ENCODE measurements at regions of chr9 and their contacts with region 1.

Region 1: DNA sequence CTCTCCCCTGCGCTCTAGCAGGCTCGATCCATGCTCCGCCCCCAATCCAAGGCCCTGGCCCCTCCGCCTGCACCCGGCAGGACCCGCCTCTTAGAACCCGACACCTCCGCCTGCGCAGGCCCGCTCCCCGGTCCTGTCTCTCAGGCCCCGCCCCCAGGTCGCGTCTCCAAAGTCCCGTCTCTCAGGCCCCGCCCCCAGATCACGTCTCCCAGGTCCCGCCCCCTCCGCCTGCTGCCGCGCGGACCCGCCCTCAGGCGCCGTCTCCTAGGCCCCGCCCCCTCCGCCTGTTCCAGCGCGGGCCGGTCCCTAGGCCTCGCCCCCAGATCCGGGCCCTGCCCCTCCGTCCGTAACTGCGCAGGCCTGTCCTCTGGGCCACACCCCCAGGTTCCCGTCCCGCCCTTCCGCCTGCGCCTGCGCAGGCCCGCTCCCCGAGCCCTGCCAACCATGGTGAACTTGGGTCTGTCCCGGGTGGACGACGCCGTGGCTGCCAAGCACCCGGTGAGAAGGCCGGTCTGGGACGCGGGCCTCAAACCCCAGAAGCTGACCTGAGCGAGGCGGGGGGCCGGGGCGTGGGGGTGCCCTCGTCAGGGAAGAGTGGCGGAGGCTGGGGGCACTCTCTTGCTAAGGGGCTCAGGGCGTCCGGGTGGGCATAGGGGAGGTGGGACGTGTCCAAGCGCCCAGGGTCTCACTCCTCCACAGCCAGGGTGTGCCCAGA is at the start of gene TMEM141:
- DNase-seq: peak; percentile 99
- ATAC-seq: peak; percentile 84
- H3K4me3 ChIP-seq: peak within 1 kb of the TSS in 4 of 5 experiments; percentile 69 to 84 (median 80)
- H3K4me3 Mint-ChIP-seq: peak within 1 kb of the TSS; percentile 87
- H3K27ac ChIP-seq: peak within 1 kb of the TSS; percentile 97 to 99
- H3K27ac Mint-ChIP-seq: peak within 1 kb of the TSS; percentile 95
- H3K4me1 ChIP-seq: peaks cover 18 to 27% of the 10 kb centered on the region in 2 donors
- H3K4me1 Mint-ChIP-seq: peaks cover 23% of the 10 kb centered on the region
- H3K27me3 ChIP-seq: no peaks in the 10 kb centered on the region
- H3K27me3 Mint-ChIP-seq: peaks cover under 1% of the 10 kb centered on the region
- CTCF ChIP-seq: no peak
- total RNA-seq, gene TMEM141: 35.7 and 39.1 TPM in 2 replicates

Region 2: DNA sequence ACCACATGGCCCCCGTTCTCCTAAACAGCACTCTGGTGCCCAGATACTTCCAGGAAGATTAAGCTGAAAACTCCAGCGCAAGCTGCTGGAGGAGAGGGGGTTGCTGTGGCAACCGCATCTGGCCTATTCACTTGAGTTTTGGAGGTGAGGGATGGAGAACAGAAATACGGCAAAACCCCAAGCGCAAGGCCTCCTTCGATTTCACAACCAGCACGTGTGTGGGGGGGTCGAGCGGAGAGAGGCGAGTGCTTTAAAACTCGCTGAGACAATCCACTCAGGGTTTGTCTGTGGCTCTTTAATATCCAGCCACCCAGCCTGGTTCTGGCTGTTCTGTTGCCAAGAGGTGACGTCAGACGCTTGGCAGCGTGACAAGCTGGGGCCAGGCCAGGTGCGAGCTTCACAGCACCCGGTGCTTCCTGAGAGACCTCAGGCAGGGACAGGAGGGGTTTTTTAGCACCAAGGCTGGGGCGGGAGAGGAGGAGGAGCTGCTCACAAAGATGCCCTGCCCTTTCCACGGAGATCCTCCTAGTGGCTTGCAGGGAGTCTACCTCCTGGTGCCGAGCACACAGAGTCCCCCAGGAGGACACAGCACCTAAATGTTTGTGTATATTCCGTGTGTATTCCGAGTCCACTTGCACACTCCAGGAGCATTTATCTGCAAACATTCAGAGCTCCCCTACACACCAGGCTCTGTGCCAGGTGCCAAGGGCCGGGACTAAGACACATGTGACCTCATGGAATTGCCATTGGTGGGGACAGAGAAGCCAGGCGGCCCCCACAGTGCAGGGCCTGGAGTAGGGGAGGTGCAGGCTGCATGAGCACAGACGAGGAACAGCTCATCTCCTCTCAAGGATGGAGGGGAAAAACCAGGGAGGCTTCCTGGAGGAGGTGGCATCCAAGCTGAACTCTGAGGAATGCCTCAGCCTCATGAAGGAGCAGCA is 1509.0 kb before region 1 on chr9:
- CTCF ChIA-PET with region 1: no interaction called
- POLR2A ChIA-PET with region 1: no interaction called
- intact Hi-C with region 1: no loop called
- DNase-seq: no peak
- ATAC-seq: no peak
- H3K4me3 ChIP-seq: no peak overlapping the region
- H3K4me3 Mint-ChIP-seq: no peak overlapping the region
- H3K27ac ChIP-seq: no peak overlapping the region
- H3K27ac Mint-ChIP-seq: no peak overlapping the region
- H3K4me1 ChIP-seq: no peaks in the 10 kb centered on the region
- H3K4me1 Mint-ChIP-seq: no peaks in the 10 kb centered on the region
- H3K27me3 ChIP-seq: no peaks in the 10 kb centered on the region
- H3K27me3 Mint-ChIP-seq: no peaks in the 10 kb centered on the region
- CTCF ChIP-seq: no peak

Region 3: DNA sequence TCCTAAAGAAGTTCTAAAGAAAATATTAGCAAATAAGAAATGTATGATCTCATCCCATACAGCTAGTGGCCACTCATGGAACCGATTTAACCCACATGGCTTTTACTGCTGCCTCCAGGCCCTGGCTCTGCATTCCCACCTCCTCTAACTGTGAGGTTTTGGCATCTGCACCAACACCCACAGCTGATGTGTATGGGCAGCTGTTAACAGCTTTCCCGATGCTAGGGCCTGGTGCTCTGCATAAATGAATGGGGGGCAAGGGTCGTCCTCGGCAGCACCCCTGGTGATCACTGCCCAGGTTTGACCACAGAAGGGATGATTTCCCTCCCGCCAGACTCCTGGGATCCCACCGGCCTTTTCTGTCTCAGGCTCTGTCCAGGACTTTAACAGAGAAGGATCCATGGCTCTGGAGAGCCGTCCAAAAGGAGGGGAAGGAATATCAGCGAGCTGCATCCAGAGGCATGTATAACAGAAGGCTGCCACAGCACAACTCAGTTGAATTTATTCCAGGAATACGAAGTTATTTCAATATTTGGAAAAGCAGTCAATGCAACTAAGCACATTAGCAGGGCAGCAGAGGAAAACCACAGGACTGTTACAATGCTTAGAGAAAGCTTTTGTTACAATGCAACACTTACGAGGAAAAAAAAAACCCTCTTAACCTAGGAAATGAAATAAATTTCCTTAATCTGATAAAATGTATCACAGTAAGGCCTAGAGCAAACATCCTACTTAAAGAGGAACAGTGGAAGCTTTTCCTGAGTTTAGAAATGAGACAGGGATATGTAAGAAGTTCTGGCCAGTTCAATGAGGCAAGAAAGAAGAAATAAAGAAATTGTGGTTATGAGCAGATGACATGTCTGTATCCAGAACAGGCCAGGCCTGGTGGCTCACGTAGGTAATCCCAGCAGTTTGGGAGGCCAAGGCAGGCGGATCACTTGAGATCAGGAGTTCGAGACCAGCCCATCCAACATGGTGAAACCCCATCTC is 759.0 kb before region 1 on chr9:
- CTCF ChIA-PET with region 1: no interaction called
- POLR2A ChIA-PET with region 1: no interaction called
- intact Hi-C with region 1: no loop called
- DNase-seq: no peak
- ATAC-seq: no peak
- H3K4me3 ChIP-seq: no peak overlapping the region
- H3K4me3 Mint-ChIP-seq: no peak overlapping the region
- H3K27ac ChIP-seq: no peak overlapping the region
- H3K27ac Mint-ChIP-seq: no peak overlapping the region
- H3K4me1 ChIP-seq: no peaks in the 10 kb centered on the region
- H3K4me1 Mint-ChIP-seq: no peaks in the 10 kb centered on the region
- H3K27me3 ChIP-seq: no peaks in the 10 kb centered on the region
- H3K27me3 Mint-ChIP-seq: peaks cover 10% of the 10 kb centered on the region
- CTCF ChIP-seq: no peak

Region 4: GRCh38 chr9:136769710-136770191 is 21.3 kb before region 1 on chr9:
- CTCF ChIA-PET with region 1: interaction called, 7 read pairs
- POLR2A ChIA-PET with region 1: interaction called, 4 read pairs
- intact Hi-C with region 1: loop called (anchors 2 kb)
- DNase-seq: peak; percentile 67
- ATAC-seq: no peak
- H3K4me3 ChIP-seq: no peak overlapping the region
- H3K4me3 Mint-ChIP-seq: peak overlapping the region; percentile 37
- H3K27ac ChIP-seq: no peak overlapping the region
- H3K27ac Mint-ChIP-seq: peak overlapping the region; percentile 46
- H3K4me1 ChIP-seq: peaks cover 23 to 45% of the 10 kb centered on the region in 2 donors
- H3K4me1 Mint-ChIP-seq: peaks cover 37% of the 10 kb centered on the region
- H3K27me3 ChIP-seq: peaks cover 0 to 8% (median 0%) of the 10 kb centered on the region in 4 experiments
- H3K27me3 Mint-ChIP-seq: peaks cover 6% of the 10 kb centered on the region
- CTCF ChIP-seq: peak; percentile 33

Region 5: GRCh38 chr9:136849038-136849959 is 58.2 kb after region 1 on chr9 and contains the start of gene PHPT1:
- CTCF ChIA-PET with region 1: no interaction called
- POLR2A ChIA-PET with region 1: no interaction called
- intact Hi-C with region 1: no loop called
- DNase-seq: peak; percentile 99
- ATAC-seq: peak; percentile 94
- H3K4me3 ChIP-seq: peak within 1 kb of the TSS; percentile 53 to 87 (median 82)
- H3K4me3 Mint-ChIP-seq: peak within 1 kb of the TSS; percentile 96
- H3K27ac ChIP-seq: peak within 1 kb of the TSS in 1 of 2 donors; percentile 55
- H3K27ac Mint-ChIP-seq: peak within 1 kb of the TSS; percentile 94
- H3K4me1 ChIP-seq: peaks cover 33 to 38% of the 10 kb centered on the region in 2 donors
- H3K4me1 Mint-ChIP-seq: peaks cover 20% of the 10 kb centered on the region
- H3K27me3 ChIP-seq: peaks cover 0 to 28% (median 9%) of the 10 kb centered on the region in 4 experiments
- H3K27me3 Mint-ChIP-seq: peaks cover 7% of the 10 kb centered on the region
- CTCF ChIP-seq: no peak
- total RNA-seq, gene PHPT1: 33.1 and 36.5 TPM in 2 replicates

Region 6: DNA sequence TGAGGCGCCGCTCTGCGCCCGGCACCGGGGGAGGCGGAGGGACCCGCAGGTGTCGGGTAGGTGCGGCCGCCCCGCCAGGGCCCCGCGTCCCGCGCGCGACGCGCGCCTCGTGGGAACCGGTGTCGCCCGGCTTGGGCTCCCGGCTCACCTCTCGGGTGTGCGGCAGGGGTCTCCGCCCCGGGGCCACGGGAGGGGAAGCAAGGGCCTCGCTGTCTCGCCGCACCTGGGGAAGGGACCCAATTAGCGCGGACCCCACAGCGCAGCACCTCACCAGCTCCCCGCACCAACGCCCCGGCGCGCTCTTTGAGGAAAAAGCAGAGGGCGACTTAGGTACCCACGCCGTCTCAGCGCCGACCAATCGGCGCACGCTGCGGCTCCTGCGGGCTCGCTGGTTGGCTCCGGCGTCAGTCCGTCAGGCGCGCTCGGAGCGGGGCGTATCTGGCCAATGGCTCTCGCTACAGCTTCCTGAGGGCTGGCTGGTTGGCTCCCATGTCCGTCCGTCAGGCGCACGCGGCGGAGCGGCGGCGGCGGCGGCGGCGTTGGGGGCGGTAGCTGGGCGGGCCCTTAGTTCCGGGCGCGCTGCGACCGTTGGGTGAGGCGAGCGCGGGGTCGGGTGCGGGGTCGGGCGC is 95.0 kb after region 1 on chr9 and contains the start of gene TRAF2:
- CTCF ChIA-PET with region 1: interaction called, 4 read pairs
- POLR2A ChIA-PET with region 1: no interaction called
- intact Hi-C with region 1: loop called (anchors 1 kb)
- DNase-seq: peak; percentile 99
- ATAC-seq: peak; percentile 91
- H3K4me3 ChIP-seq: peak within 1 kb of the TSS; percentile 30 to 91 (median 83)
- H3K4me3 Mint-ChIP-seq: peak within 1 kb of the TSS; percentile 91
- H3K27ac ChIP-seq: peak within 1 kb of the TSS; percentile 78 to 99
- H3K27ac Mint-ChIP-seq: peak within 1 kb of the TSS; percentile 87
- H3K4me1 ChIP-seq: peaks cover 28 to 36% of the 10 kb centered on the region in 2 donors
- H3K4me1 Mint-ChIP-seq: peaks cover 34% of the 10 kb centered on the region
- H3K27me3 ChIP-seq: no peaks in the 10 kb centered on the region
- H3K27me3 Mint-ChIP-seq: no peaks in the 10 kb centered on the region
- CTCF ChIP-seq: no peak
- total RNA-seq, gene TRAF2: 54.5 and 55.4 TPM in 2 replicates

Region 7: DNA sequence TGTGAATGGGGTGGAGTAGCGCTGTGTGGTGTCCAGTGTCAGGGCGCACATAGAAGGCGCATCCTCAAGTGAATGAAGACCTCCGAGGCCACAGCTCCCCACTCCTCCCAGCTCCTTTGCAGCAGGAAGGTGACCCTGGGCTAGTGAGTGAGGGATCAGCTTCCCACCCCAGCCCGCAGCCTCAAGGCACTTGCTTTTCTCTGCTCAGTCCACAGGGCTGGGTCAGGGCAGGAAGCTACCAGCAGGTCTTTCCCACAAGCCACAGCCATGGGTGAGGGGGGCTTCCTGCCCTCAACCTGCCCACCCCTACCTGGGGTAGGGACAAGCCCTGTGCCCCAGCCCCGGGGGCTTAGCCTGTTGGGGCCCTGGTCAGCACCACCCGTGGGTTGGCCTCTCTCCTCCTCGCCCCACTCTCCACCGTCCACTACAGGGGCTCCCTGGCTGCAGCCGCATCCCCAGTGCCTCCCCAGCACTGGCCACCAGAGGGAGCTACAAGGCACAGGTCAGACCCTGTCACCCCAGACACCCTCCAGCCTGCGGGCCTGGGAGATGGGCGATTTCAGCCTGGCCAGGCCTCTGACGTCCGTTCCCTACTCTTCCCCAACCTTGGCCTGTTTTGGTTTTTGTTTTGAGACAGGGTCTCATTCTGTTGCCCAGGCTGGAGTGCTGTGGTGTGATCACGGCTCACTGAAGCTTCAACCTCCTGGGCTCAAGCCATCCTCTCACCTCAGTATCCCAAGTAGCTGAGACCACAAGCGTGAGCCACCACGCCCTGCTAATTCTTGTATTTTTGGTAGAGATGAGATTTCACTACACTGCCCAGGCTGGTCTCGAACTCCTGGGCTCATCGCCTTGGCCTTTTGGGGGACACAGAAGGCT is 238.2 kb after region 1 on chr9:
- CTCF ChIA-PET with region 1: interaction called, 106 read pairs
- POLR2A ChIA-PET with region 1: no interaction called
- intact Hi-C with region 1: loop called (anchors 1 kb)
- DNase-seq: peak; percentile 85
- ATAC-seq: peak; percentile 31
- H3K4me3 ChIP-seq: peak overlapping the region; percentile 4 to 77 (median 66)
- H3K4me3 Mint-ChIP-seq: peak overlapping the region; percentile 90
- H3K27ac ChIP-seq: peak overlapping the region in 1 of 2 donors; percentile 71
- H3K27ac Mint-ChIP-seq: peak overlapping the region; percentile 92
- H3K4me1 ChIP-seq: peaks cover 61 to 78% of the 10 kb centered on the region in 2 donors
- H3K4me1 Mint-ChIP-seq: peaks cover 66% of the 10 kb centered on the region
- H3K27me3 ChIP-seq: no peaks in the 10 kb centered on the region
- H3K27me3 Mint-ChIP-seq: no peaks in the 10 kb centered on the region
- CTCF ChIP-seq: peak; percentile 87

Region 8: DNA sequence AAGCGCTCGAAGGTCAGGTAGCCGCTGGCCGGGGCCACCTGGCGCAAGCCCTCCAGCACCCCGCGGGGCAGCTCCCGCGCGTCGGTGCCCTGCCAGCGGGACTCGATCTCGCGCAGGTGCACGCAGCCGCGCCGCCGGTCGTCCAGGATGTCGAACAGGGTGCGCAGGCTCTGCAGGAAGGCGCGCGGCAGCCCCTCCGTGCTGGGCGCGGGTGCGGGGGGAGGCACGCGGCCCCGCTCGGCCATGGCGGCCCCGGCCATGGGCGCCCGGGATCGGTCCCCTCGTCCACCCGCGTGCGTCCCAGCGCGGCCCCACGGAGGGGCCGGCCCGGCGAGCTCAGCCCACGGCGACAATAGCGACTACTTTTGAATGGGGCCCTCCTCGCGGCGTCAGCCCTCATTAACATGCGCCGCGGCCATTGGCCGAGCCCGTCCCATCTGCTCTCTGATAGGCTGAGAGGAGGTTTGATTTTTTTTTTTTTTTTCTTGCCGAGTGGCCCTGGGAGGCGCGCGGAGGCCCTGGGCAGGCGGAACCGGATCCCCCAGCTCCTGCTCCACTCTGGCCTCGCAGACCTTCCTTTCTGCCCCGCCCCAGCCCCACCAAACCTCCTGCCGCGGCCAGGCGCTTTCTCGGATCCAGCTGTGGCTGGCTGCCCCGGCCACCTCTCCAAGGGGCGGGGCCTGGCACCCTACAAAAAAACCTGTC is 279.3 kb after region 1 on chr9 and contains the start of gene SAPCD2:
- CTCF ChIA-PET with region 1: interaction called, 13 read pairs
- POLR2A ChIA-PET with region 1: no interaction called
- intact Hi-C with region 1: no loop called
- DNase-seq: peak; percentile 93
- ATAC-seq: peak; percentile 85
- H3K4me3 ChIP-seq: peak within 1 kb of the TSS in 4 of 5 experiments; percentile 36 to 47 (median 44)
- H3K4me3 Mint-ChIP-seq: peak within 1 kb of the TSS; percentile 82
- H3K27ac ChIP-seq: no peak within 1 kb of the TSS
- H3K27ac Mint-ChIP-seq: peak within 1 kb of the TSS; percentile 81
- H3K4me1 ChIP-seq: peaks cover 19 to 36% of the 10 kb centered on the region in 2 donors
- H3K4me1 Mint-ChIP-seq: peaks cover 26% of the 10 kb centered on the region
- H3K27me3 ChIP-seq: peaks cover 0 to 15% (median 1%) of the 10 kb centered on the region in 4 experiments
- H3K27me3 Mint-ChIP-seq: peaks cover 3% of the 10 kb centered on the region
- CTCF ChIP-seq: no peak
- total RNA-seq, gene SAPCD2: 0.39 and 0.73 TPM in 2 replicates

Region 9: DNA sequence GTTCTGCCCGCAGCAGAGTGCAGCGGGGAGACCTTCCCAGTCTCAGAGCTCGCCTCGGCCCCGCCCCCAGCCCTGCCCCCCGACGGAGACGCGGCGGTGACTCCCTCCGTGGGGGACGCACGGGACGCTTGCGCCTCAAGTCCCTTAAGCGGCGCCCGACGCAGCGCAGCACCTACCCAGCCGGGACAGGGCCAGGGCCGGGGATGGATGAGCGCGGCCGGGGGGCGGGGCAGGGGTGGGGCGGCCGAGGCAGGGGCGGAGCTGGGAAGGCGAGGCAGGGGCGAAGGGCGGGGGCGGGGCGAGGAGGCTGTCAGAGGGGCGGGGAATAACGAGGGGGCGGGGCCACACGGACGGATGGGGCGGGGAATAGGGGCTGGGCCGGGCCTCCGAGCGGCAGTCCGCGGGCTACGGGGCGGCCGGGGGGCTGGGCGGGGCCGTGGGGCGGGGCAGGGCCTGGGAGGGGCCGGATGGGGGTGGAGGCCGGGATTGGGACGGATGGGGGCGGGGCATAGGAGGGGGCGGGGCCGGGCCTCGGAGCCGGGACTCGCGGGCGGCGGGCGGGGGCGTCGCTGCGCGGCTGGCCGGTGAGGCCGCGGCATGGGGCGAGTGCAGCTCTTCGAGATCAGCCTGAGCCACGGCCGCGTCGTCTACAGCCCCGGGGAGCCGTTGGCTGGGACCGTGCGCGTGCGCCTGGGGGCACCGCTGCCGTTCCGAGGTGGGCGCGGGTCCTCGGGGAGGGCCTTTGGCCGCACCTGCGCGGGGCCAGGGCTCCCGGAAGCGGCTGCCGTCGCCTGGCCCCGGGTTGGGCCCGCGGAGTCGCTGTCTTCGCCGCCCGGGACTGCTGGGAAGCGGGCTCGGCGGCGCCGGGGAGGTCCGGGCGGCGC is 814.3 kb after region 1 on chr9 and contains the start of gene ARRDC1:
- CTCF ChIA-PET with region 1: no interaction called
- POLR2A ChIA-PET with region 1: no interaction called
- intact Hi-C with region 1: loop called (anchors 2 kb)
- DNase-seq: peak; percentile 93
- ATAC-seq: peak; percentile 86
- H3K4me3 ChIP-seq: peak within 1 kb of the TSS; percentile 34 to 74 (median 60)
- H3K4me3 Mint-ChIP-seq: peak within 1 kb of the TSS; percentile 86
- H3K27ac ChIP-seq: peak within 1 kb of the TSS in 1 of 2 donors; percentile 61
- H3K27ac Mint-ChIP-seq: peak within 1 kb of the TSS; percentile 65
- H3K4me1 ChIP-seq: peaks cover 12 to 25% of the 10 kb centered on the region in 2 donors
- H3K4me1 Mint-ChIP-seq: peaks cover 21% of the 10 kb centered on the region
- H3K27me3 ChIP-seq: no peaks in the 10 kb centered on the region
- H3K27me3 Mint-ChIP-seq: no peaks in the 10 kb centered on the region
- CTCF ChIP-seq: no peak
- total RNA-seq, gene ARRDC1: 89.2 and 96.6 TPM in 2 replicates

Measured in B cell (primary cell).